Left ventricle myocardium superior (tissue), 1 donor: ENCODE measurements at regions of chr6 and their contacts with region 1.

Region 1: DNA sequence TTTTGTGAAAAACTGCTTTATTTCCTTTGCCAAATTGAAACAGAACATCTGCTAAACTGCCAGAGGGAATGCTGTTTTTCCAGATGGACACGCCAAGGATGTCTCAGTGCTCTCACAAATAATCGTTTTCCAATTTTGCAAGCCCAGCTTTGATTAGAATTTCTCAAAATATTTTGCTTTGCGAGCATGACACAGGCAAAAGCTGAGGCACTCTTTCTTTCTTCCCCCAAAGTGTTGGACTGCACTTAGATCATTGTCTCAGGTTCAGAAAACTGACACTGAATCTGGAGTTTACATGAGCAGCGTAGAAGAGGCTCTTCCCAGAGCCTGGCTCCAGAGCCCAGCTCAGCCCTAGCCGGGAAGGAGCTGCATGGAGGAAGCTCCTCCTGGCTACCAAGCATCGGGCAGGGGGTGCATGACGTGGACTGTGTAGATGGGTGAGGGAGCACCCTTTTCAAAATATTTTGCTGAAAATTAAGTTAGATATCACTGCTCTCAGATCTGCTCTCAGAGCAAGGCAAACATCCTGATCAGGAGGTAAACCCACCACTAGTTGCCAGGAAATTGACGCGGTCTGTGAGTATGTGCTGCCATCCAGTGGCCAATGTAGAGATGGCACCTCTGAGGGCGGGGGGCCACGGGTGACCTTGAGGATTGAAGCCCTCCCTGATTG is 107.5 kb downstream of the SLC22A3 start:
- DNase-seq: peak; percentile 63
- ATAC-seq: peak; percentile 91

Region 2: GRCh38 chr6:159493898-159494585 is 961.6 kb before region 1 on chr6:
- intact Hi-C with region 1: no loop called
- DNase-seq: no peak
- ATAC-seq: peak; percentile 70

Region 3: DNA sequence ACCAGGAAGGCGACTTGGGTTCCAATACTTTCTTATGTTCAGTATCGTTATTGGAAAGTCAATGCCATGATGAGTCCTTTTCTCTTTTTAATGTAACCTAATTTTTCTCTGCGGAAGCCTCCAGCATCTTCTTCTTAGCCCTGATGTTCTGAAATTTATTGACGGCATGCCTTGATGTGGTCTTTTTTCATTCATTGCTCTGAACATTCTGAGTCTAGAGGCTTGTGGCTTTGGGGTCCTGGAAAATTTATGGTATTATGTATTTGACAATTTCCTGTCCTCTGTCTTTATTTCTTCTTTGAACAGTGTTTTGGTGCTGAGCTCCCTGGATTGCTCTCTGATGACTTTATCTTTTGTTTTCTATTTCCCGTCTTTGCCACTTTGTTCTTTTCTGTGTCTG is 593.6 kb before region 1 on chr6:
- intact Hi-C with region 1: loop called (anchors 10 kb)
- DNase-seq: no peak
- ATAC-seq: no peak

Region 4: GRCh38 chr6:160137989-160138835 is 317.5 kb before region 1 on chr6:
- intact Hi-C with region 1: loop called (anchors 5 kb)
- DNase-seq: peak; percentile 64
- ATAC-seq: peak; percentile 73